Motor neuron (in vitro differentiated cells): ENCODE measurements at regions of chr6 and their contacts with region 1.

Region 1: DNA sequence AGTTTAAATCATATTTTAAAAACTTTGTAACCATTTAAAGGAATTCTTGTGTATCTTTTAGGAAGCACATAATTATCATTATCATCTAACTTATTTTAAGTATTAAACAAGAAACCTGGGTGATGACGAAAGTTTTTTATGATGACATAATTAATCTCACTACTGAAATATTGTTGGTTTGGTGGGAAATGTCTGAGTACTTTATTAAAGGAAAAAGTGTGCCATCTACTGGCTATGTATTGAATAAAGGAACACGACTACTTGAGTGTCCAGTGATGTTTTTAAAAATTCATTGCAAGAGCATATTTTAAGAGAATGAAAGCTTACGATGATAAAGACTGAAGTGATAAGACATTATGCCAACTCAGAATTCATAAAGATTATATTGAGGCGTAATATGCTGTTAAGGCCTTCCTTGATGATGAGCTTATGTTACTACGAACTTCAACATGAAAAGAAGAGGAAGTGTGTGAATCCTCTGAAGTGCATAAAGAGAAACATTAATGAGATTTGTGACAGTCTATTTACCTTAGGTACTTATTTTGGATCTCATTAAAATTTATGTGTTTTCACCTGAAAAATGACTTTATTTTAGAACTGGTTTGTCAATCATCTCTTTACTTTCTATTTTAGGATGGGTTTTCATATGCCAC is 12.0 kb upstream of the TRMT11 start:
- ATAC-seq: peak in 3 of 8 experiments; percentile 57 to 78 (median 62)
- H3K4me3 ChIP-seq: no peak overlapping the region
- H3K27ac ChIP-seq: no peak overlapping the region
- H3K4me1 ChIP-seq: no peaks in the 10 kb centered on the region

Region 2: GRCh38 chr6:125779924-125780539 is 194.3 kb before region 1 on chr6:
- in situ Hi-C with region 1: loop called in 6 of 9 experiments (anchors 10 to 25 kb)
- ATAC-seq: peak; percentile 78 to 92 (median 88)
- H3K4me3 ChIP-seq: peak overlapping the region; percentile 52 to 57 (median 53)
- H3K27ac ChIP-seq: peak overlapping the region; percentile 76 to 86
- H3K4me1 ChIP-seq: peaks cover 5 to 11% of the 10 kb centered on the region in 2 donors